ENCODE measurements at regions of chr9 and their contacts with region 1.

Region 1: DNA sequence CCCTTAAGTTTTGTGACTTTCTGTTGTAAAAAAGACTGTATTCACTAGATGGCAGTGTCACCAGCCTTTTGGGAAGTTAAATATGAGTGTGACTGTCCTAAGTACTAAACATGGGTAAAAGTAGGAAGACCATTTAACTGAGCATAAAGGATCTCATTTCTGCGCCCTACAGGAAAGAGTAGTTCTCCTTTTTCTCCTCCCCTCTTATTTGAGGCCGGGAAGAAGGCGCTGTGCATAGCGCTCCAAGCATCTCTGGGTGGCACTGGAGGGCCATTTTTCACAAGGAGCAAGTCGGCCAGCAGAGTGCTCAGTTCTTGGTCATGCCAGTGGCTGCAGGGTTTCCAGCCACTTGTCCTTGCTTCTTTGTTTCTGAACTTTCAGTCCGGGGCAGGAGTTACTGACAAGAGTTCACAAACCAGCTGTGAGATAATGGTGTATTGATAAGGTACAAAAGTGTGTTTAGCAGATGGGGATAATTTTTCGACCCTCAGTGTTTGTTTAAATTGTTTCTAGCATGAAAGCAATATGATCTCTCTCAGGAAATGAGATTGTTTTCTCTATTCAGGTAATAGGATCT is 227.6 kb upstream of the DMRT1 start:
- DNase-seq: peak; percentile 65 to 93 (median 85)

Region 2: DNA sequence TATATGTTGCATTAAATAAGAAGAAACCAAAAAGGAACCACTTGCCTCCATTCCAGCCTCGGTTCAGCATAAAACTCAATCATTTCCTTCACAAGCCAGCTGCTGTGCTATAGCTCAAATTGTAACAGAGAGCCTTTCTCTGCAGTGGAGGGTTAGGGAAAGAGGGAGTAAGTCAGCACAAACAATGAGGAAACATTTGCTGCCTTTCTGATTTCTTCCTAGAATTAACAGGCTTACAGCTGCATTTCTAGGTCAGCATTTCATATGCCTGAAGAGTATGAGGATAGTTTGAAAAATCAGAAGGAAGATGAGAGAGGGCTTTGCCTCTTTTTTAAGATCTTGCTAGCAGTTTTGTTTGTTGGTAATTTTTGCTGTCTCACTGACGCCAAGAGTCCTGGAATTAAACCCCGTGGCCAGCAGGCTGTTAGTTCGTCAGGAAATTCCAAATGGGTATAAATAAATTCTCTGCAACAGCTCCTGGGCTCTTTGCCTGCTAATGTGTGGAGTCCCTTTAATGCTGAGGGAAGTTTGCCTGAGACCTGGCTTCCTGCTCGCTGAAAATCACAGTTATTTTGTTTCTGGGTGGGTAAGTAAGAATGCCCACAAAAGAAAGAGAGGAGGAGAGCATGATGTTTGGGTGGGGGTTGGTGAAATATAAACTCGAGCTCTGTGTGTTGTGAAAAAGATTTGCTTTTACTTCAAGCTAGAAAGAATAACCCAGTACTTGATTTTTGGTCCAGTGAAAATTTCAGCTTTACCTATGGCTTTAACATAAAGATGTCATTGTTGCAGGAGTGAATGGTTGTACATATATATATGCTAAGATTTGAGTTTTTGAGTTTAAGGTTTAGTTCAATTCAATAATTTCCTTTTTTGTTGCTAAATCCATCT is 79.6 kb after region 1 on chr9:
- intact Hi-C with region 1: loop called (anchors 5 kb)
- DNase-seq: peak in 19 of 42 donors; percentile 40 to 81 (median 57)

Region 3: GRCh38 chr9:757246-757881 is 143.5 kb after region 1 on chr9:
- intact Hi-C with region 1: loop called (anchors 2 kb)
- DNase-seq: peak in 30 of 42 donors; percentile 18 to 80 (median 54)